Colonic mucosa (tissue), 4 donors: ENCODE measurements at regions of chr3 and their contacts with region 1.

Region 1: GRCh38 chr3:81302045-81302444 is 459.4 kb downstream of the GBE1 start:
- DNase-seq: peak; percentile 29
- H3K4me3 ChIP-seq: no peak overlapping the region
- H3K27ac ChIP-seq: no peak overlapping the region
- H3K4me1 ChIP-seq: no peaks in the 10 kb centered on the region
- H3K27me3 ChIP-seq: no peaks in the 10 kb centered on the region
- CTCF ChIP-seq: peak; percentile 62

Region 2: DNA sequence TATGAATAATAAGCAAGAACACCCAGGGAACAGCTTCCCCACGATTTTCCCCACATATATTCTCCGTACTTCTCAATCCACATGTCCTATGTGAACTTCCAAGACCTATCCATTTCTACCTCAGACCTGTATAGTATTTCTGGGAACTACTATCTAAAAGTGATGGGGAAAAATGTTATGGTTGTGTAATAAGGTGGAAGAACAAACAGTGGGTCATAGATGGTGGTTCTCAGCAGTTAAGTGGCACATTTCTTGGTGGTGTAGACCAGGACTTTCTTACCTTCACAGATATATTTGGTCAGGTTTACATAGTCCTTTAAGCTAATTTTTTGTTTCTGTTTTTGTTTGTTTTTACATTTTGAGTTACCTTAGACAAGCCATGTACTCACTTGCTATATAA is 215.7 kb before region 1 on chr3:
- intact Hi-C with region 1: no loop called
- DNase-seq: no peak
- H3K4me3 ChIP-seq: no peak overlapping the region
- H3K27ac ChIP-seq: no peak overlapping the region
- H3K4me1 ChIP-seq: no peaks in the 10 kb centered on the region
- H3K27me3 ChIP-seq: no peaks in the 10 kb centered on the region
- CTCF ChIP-seq: no peak

Region 3: GRCh38 chr3:81242871-81243270 is 59.2 kb before region 1 on chr3:
- intact Hi-C with region 1: no loop called
- DNase-seq: no peak
- H3K4me3 ChIP-seq: no peak overlapping the region
- H3K27ac ChIP-seq: no peak overlapping the region
- H3K4me1 ChIP-seq: no peaks in the 10 kb centered on the region
- H3K27me3 ChIP-seq: no peaks in the 10 kb centered on the region
- CTCF ChIP-seq: peak; percentile 40

Region 4: DNA sequence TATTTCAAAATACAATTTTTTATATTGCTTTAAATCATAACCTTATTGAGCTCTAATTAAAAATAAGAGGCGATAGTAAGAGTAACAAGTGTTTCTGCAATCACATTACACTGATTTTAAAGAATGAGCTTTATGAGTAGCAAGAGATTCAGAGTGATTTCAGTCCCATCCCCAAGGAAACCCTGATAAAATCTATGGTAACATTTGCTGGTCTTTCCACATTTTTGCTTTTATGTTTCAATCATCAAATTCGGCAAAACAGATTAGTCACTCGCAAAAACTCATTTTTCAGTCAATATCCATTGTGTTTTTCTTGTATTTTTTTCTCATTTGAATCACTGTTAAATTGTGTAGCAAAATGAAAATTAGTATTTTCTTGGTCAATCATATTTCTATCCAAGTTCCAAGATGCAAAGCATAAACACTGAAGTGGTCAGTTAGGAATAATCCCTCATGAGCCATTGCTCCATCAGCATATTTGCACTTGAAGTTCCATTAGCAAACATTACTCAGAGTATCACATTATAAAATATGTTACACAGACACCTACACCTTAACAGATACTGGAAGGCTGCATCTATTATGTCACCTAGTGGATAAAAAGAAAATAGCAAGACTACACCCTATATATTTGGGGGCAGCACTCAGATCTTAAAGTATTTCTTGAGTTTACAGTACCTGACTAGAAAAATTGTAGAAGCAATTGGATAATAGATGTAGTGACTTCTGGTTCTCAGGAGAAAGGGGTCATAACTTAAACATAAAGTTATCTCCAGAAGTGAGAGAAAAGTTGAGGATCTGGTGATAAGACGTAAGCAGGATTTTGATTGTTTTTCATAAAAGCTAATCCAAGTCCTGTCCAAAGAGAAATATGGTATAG is 36.9 kb after region 1 on chr3:
- intact Hi-C with region 1: loop called (anchors 2 kb)
- DNase-seq: no peak
- H3K4me3 ChIP-seq: no peak overlapping the region
- H3K27ac ChIP-seq: no peak overlapping the region
- H3K4me1 ChIP-seq: no peaks in the 10 kb centered on the region
- H3K27me3 ChIP-seq: no peaks in the 10 kb centered on the region
- CTCF ChIP-seq: peak; percentile 38